OCI-LY7 (cell line): ENCODE measurements at regions of chr7 and their contacts with region 1.

Region 1: GRCh38 chr7:67377939-67378862 is 381.6 kb downstream of the TYW1 start:
- DNase-seq: peak; percentile 73
- H3K4me3 ChIP-seq: no peak overlapping the region
- H3K27ac ChIP-seq: no peak overlapping the region
- H3K4me1 ChIP-seq: no peaks in the 10 kb centered on the region
- CTCF ChIP-seq: peak; percentile 84

Region 2: GRCh38 chr7:67006971-67007370 is 371.2 kb before region 1 on chr7:
- CTCF ChIA-PET with region 1: no interaction called
- POLR2A ChIA-PET with region 1: no interaction called
- intact Hi-C with region 1: no loop called
- DNase-seq: no peak
- H3K4me3 ChIP-seq: no peak overlapping the region
- H3K27ac ChIP-seq: no peak overlapping the region
- H3K4me1 ChIP-seq: no peaks in the 10 kb centered on the region
- CTCF ChIP-seq: no peak

Region 3: DNA sequence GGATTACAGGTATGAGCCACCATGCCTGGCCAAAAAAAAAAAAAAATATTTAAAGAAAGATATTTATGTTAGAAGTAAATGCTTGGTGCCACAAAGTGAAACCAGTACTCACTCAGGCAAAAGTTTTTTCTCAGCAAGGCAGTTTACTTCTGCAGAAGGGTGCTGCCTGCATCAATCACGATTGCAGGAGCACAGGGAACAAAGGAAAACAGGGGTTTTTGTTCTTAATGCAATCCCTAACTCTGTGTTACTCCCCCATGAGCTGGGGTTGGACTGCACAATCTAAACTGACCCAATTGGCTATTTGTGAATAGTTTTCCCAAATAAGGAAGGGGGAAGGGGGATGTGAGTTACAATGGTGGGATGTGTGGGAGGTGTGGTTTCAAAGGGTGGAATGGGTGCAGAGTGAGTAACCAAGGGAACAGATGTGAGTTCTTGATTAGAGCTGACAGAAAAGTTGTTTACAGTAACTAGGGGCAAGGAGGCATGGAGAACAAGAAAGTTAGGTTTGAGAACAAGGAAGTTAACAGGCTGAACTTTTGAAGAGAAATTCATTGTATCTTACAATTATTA is 126.1 kb before region 1 on chr7:
- CTCF ChIA-PET with region 1: no interaction called
- POLR2A ChIA-PET with region 1: no interaction called
- intact Hi-C with region 1: no loop called
- DNase-seq: no peak
- H3K4me3 ChIP-seq: no peak overlapping the region
- H3K27ac ChIP-seq: no peak overlapping the region
- H3K4me1 ChIP-seq: no peaks in the 10 kb centered on the region
- CTCF ChIP-seq: no peak

Region 4: GRCh38 chr7:67267914-67268313 is 110.3 kb before region 1 on chr7:
- CTCF ChIA-PET with region 1: no interaction called
- POLR2A ChIA-PET with region 1: no interaction called
- intact Hi-C with region 1: no loop called
- DNase-seq: no peak
- H3K4me3 ChIP-seq: no peak overlapping the region
- H3K27ac ChIP-seq: no peak overlapping the region
- H3K4me1 ChIP-seq: no peaks in the 10 kb centered on the region
- CTCF ChIP-seq: no peak

Region 5: DNA sequence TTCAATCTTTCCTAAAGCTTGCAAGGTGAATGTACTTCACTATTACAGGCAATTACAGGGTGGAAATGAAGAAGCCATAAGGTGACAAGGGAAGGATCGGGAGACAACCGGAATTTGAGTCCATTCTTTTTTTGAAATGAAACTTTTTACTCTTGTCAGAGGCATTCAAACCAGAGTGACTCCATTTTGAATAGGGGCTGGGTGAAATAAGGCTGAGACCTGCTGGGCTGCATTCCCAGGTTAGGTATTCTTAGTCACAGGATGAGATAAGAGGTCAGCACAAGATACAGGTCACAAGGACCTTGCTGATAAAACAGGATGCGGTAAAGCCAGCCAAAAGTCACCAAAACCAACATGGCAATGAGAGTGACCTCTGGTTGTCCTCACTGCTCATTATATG is 18.3 kb before region 1 on chr7:
- CTCF ChIA-PET with region 1: no interaction called
- POLR2A ChIA-PET with region 1: no interaction called
- intact Hi-C with region 1: no loop called
- DNase-seq: no peak
- H3K4me3 ChIP-seq: no peak overlapping the region
- H3K27ac ChIP-seq: no peak overlapping the region
- H3K4me1 ChIP-seq: no peaks in the 10 kb centered on the region
- CTCF ChIP-seq: no peak

Region 6: DNA sequence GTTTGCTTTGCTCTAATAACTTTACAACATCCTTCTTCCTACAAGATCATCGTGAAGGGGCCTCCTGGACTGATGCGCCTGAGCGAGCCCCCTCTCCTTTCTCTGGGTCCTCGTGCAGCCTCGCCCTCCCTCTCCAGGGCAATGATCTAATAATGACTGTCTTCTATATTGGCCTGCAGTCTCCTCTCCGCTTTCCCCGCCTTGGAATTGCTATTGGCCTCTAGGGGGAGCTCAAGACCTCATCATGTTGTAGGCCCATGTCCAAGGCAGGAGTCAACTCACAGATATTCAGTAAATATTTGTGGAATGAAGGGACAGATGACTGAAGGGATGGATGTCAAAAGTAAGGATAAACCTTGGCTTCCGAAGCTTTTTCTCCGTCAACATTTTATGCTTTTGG is 798.8 kb after region 1 on chr7:
- CTCF ChIA-PET with region 1: no interaction called
- POLR2A ChIA-PET with region 1: no interaction called
- intact Hi-C with region 1: loop called (anchors 5 kb)
- DNase-seq: peak; percentile 60
- H3K4me3 ChIP-seq: no peak overlapping the region
- H3K27ac ChIP-seq: no peak overlapping the region
- H3K4me1 ChIP-seq: no peaks in the 10 kb centered on the region
- CTCF ChIP-seq: peak; percentile 86